AG04450 (cell line): ENCODE measurements at regions of chr7 and their contacts with region 1.

Region 1: GRCh38 chr7:92833024-92833765 is 3.2 kb downstream of the CDK6 start:
- DNase-seq: no peak
- H3K4me3 ChIP-seq: peak overlapping the region; percentile 91
- H3K27ac ChIP-seq: peak overlapping the region; percentile 95
- H3K27me3 ChIP-seq: no peaks in the 10 kb centered on the region
- CTCF ChIP-seq: peak; percentile 72

Region 2: DNA sequence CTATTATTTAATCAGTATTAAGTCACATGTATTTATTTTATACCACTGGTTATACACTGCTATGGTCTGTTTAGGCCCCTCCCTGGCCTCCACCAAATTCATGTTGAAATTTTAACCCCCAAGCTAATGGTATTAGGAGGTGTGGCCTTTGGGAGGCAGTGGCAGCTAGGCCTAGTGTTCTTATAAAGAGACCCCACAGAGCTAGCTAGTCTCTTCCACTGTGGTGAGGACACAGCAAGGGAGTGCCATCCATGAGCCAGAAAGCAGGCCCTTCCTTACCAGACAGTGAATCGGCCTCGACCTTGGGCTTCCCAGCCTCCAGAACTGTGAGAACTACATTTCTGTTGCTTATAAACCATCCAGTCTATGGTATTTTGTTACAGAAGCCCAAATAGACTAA is 275.9 kb before region 1 on chr7:
- CTCF ChIA-PET with region 1: no interaction called
- POLR2A ChIA-PET with region 1: no interaction called
- DNase-seq: no peak
- H3K4me3 ChIP-seq: no peak overlapping the region
- H3K27ac ChIP-seq: no peak overlapping the region
- H3K27me3 ChIP-seq: no peaks in the 10 kb centered on the region
- CTCF ChIP-seq: no peak

Region 3: DNA sequence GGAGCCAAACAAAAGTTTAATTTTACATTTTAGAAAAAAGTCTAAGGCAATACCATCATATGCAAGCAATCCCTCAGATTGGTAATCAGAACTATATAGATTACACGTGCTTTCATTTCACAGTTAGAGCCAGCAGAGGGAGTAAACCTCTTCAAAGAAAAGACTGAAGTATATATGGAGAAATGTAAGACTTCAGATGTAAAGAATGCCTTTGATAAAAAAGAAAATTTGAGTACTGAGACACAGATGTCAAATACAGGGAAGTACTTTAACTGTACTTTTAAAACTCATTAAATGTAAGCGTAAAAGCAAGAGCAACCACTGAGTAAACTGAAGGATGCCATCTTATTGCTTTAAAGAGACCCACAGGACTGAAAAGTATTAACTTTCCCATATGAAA is 141.6 kb before region 1 on chr7:
- CTCF ChIA-PET with region 1: interaction called, 14 read pairs
- POLR2A ChIA-PET with region 1: interaction called, 8 read pairs
- DNase-seq: peak; percentile 29
- H3K4me3 ChIP-seq: no peak overlapping the region
- H3K27ac ChIP-seq: no peak overlapping the region
- H3K27me3 ChIP-seq: no peaks in the 10 kb centered on the region
- CTCF ChIP-seq: peak; percentile 60

Region 4: DNA sequence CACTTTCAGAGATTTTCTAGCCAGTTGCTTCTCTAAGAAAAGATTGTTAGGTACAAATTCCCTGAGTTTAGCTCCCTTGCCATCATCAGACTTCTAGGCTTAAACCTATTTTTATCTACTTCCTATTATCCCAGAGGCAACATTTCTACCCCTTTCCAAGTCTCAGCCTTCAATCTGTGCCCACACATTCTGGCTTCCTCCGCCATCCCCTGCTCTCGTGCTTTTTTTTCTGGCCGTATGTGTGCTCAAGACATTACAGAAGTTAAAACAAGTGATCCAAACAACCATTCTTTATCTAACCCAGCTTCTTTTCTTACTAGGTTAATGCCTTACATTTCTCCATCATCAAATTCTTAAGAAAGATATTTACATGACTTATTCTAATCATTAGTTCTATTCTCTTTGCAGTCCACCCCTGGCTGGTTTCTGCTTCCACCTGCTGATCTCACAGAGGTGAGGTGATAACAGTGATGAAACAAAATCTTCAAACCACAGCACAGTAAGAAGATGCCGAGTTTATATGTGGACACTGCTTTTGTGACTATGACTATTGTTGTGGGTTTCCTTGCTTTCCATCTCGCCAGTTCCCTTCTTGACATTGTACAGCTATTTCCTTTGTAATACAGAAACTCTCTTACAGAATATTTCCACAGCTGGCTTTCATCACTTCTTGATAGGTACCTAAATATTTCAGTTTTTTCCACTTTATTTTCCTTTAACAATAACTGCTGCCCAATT is 21.5 kb after region 1 on chr7:
- CTCF ChIA-PET with region 1: no interaction called
- POLR2A ChIA-PET with region 1: no interaction called
- DNase-seq: no peak
- H3K4me3 ChIP-seq: no peak overlapping the region
- H3K27ac ChIP-seq: no peak overlapping the region
- H3K27me3 ChIP-seq: no peaks in the 10 kb centered on the region
- CTCF ChIP-seq: no peak

Region 5: GRCh38 chr7:92988051-92988450 is 154.9 kb after region 1 on chr7:
- CTCF ChIA-PET with region 1: interaction called, 10 read pairs
- POLR2A ChIA-PET with region 1: interaction called, 3 read pairs
- DNase-seq: no peak
- H3K4me3 ChIP-seq: no peak overlapping the region
- H3K27ac ChIP-seq: no peak overlapping the region
- H3K27me3 ChIP-seq: no peaks in the 10 kb centered on the region
- CTCF ChIP-seq: peak; percentile 58

Region 6: GRCh38 chr7:93015779-93016481 is 182.7 kb after region 1 on chr7:
- CTCF ChIA-PET with region 1: interaction called, 6 read pairs
- POLR2A ChIA-PET with region 1: interaction called, 11 read pairs
- DNase-seq: no peak
- H3K4me3 ChIP-seq: no peak overlapping the region
- H3K27ac ChIP-seq: peak overlapping the region; percentile 94
- H3K27me3 ChIP-seq: no peaks in the 10 kb centered on the region
- CTCF ChIP-seq: no peak

Region 7: GRCh38 chr7:93503071-93503470 is 669.9 kb after region 1 on chr7:
- CTCF ChIA-PET with region 1: no interaction called
- POLR2A ChIA-PET with region 1: no interaction called
- DNase-seq: no peak
- H3K4me3 ChIP-seq: no peak overlapping the region
- H3K27ac ChIP-seq: no peak overlapping the region
- H3K27me3 ChIP-seq: no peaks in the 10 kb centered on the region
- CTCF ChIP-seq: no peak